Endothelial cell of umbilical vein (primary cell): ENCODE measurements at regions of chr9 and their contacts with region 1.

Region 1: GRCh38 chr9:70419546-70420266 is 5.2 kb upstream of the KLF9 start:
- DNase-seq: peak; percentile 98
- H3K4me3 ChIP-seq: peak overlapping the region in 2 of 3 experiments; percentile 43 to 50
- H3K27ac ChIP-seq: peak overlapping the region; percentile 96
- H3K4me1 ChIP-seq: peaks cover 29% of the 10 kb centered on the region
- H3K27me3 ChIP-seq: no peaks in the 10 kb centered on the region
- CTCF ChIP-seq: peak in 1 of 2 donors; percentile 9
- POLR2A ChIP-seq: peak; percentile 92

Region 2: GRCh38 chr9:70392189-70392588 is 27.5 kb before region 1 on chr9:
- CTCF ChIA-PET with region 1: interaction called, 8 read pairs
- POLR2A ChIA-PET with region 1: interaction called, 5 read pairs
- dilution Hi-C with region 1: no loop called
- intact Hi-C with region 1: loop called (anchors 2 kb)
- DNase-seq: peak; percentile 12
- H3K4me3 ChIP-seq: no peak overlapping the region
- H3K27ac ChIP-seq: no peak overlapping the region
- H3K4me1 ChIP-seq: peaks cover 32% of the 10 kb centered on the region
- H3K27me3 ChIP-seq: no peaks in the 10 kb centered on the region
- CTCF ChIP-seq: peak in 1 of 2 donors; percentile 15
- POLR2A ChIP-seq: no peak

Region 3: DNA sequence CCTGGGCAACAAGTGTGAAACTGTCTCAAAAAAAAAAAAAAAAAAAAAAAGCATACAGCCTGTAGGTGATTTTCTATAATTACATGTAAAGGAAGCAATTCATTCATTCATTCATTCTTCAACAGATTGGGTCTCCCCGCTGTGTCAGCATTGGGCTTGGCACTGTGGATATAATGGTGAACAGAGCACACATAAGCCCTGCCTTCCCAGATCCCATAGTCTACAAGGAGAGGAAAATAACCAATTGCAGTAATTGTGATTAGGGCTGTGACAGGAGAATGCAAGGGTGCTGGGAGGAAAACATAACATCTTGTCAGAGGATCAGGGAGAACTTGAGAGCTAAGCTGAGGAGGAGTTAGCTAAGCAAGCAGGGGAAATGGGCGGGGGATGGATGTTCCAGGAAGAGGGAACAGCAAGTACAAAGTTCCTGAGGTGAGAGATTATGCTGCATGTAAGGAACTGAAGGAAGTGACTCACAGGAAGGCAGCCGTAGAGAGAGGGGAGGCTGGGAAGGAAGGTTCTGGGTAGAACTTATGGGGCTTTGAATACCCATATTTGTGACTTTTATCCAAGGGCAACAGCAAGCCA is 18.7 kb after region 1 on chr9:
- CTCF ChIA-PET with region 1: interaction called, 8 read pairs
- POLR2A ChIA-PET with region 1: interaction called, 9 read pairs
- dilution Hi-C with region 1: no loop called
- intact Hi-C with region 1: loop called (anchors 1 kb)
- DNase-seq: peak; percentile 93
- H3K4me3 ChIP-seq: no peak overlapping the region
- H3K27ac ChIP-seq: peak overlapping the region; percentile 71
- H3K4me1 ChIP-seq: peaks cover 48% of the 10 kb centered on the region
- H3K27me3 ChIP-seq: no peaks in the 10 kb centered on the region
- CTCF ChIP-seq: no peak
- POLR2A ChIP-seq: peak; percentile 61

Region 4: GRCh38 chr9:70534061-70534460 is 114.4 kb after region 1 on chr9:
- CTCF ChIA-PET with region 1: no interaction called
- POLR2A ChIA-PET with region 1: interaction called, 9 read pairs
- dilution Hi-C with region 1: no loop called
- intact Hi-C with region 1: loop called (anchors 1 kb)
- DNase-seq: peak; percentile 80
- H3K4me3 ChIP-seq: no peak overlapping the region
- H3K27ac ChIP-seq: peak overlapping the region; percentile 84
- H3K4me1 ChIP-seq: peaks cover 32% of the 10 kb centered on the region
- H3K27me3 ChIP-seq: no peaks in the 10 kb centered on the region
- CTCF ChIP-seq: no peak
- POLR2A ChIP-seq: no peak

Region 5: DNA sequence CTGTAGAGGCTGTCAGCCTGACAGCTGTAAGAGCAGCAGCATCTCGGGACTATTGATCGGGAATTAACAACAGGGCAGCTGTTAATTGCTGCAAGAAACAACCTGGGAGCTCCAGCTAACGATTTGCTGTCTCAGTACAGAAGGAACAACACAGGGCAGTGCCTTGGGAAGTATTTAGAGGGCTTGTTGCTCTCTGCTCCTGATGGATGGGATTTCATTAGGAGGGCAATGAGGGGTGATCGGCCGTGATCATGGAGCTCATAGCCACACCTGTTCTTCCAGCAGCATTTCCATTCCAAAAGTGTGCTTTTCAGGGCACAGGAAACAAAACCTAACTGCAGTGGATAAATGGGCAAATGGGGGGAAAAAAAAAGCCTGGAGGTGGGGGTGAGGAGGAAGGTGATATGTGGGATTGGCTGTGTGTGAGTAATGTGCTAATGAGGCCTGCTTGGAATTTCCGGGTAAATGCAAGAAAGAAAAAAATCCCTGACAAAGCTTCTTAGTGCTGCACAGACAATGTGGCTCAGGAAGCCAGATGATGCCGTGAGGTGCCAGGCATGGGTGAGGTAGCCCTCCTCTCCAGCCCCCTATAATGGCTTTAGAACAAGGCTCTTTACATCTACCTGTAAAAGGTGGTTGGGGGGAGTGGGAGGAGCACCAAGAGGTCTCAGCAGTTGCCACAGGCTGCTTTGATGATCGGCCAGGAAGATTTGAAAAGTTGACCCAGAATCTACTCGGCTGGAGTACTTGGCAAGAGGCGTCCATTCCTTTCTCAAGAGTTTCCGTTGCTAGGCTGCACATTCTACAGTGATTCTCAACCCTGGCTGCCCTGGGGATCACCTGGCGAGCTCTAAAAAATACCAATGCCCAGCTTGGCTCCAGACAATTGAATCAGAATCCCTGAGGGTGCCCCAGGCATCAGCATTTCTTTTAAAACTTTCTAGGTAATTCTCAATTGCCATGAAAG is 134.3 kb after region 1 on chr9:
- CTCF ChIA-PET with region 1: no interaction called
- POLR2A ChIA-PET with region 1: no interaction called
- dilution Hi-C with region 1: no loop called
- intact Hi-C with region 1: loop called (anchors 1 kb)
- DNase-seq: peak; percentile 69
- H3K4me3 ChIP-seq: peak overlapping the region in 1 of 3 experiments; percentile 16
- H3K27ac ChIP-seq: peak overlapping the region; percentile 89
- H3K4me1 ChIP-seq: peaks cover 24% of the 10 kb centered on the region
- H3K27me3 ChIP-seq: no peaks in the 10 kb centered on the region
- CTCF ChIP-seq: no peak
- POLR2A ChIP-seq: peak; percentile 45

Region 6: DNA sequence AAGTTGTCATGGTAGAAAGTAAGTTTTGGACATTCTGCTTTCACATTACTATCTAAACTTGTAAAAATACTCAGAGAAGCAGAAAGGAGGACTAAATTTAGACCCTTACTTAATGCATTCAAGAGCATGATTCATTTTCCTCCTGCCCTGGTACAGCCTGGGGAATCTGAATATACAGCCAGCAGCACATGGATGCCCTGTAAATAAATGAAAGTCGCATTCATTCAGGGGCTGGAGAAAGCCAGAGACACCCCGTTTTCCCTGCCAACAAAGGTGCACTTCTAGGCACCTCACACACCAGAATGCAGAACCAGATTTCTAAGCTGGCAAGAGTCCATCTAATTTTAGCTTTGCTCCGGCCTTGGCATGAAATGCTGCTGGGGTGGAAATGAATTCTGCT is 167.5 kb after region 1 on chr9:
- CTCF ChIA-PET with region 1: no interaction called
- POLR2A ChIA-PET with region 1: interaction called, 3 read pairs
- dilution Hi-C with region 1: no loop called
- intact Hi-C with region 1: loop called (anchors 1 kb)
- DNase-seq: peak; percentile 83
- H3K4me3 ChIP-seq: no peak overlapping the region
- H3K27ac ChIP-seq: peak overlapping the region; percentile 68
- H3K4me1 ChIP-seq: peaks cover 34% of the 10 kb centered on the region
- H3K27me3 ChIP-seq: no peaks in the 10 kb centered on the region
- CTCF ChIP-seq: no peak
- POLR2A ChIP-seq: no peak